ENCODE measurements at regions of chr12 and their contacts with region 1.

Region 1: GRCh38 chr12:117367011-117367638 is 5.7 kb upstream of the NOS1 start:
- DNase-seq: peak; percentile 37 to 72
- ATAC-seq: peak; percentile 74

Region 2: GRCh38 chr12:117279606-117280005 is 87.5 kb before region 1 on chr12:
- intact Hi-C with region 1: no loop called
- DNase-seq: no peak
- ATAC-seq: no peak

Region 3: GRCh38 chr12:117412465-117413188 is 45.5 kb after region 1 on chr12:
- intact Hi-C with region 1: no loop called
- DNase-seq: no peak
- ATAC-seq: no peak

Region 4: GRCh38 chr12:117587631-117588287 is 220.6 kb after region 1 on chr12:
- intact Hi-C with region 1: loop called in 1 of 2 experiments (anchors 5 kb)
- DNase-seq: peak; percentile 32 to 62
- ATAC-seq: peak; percentile 71

Region 5: DNA sequence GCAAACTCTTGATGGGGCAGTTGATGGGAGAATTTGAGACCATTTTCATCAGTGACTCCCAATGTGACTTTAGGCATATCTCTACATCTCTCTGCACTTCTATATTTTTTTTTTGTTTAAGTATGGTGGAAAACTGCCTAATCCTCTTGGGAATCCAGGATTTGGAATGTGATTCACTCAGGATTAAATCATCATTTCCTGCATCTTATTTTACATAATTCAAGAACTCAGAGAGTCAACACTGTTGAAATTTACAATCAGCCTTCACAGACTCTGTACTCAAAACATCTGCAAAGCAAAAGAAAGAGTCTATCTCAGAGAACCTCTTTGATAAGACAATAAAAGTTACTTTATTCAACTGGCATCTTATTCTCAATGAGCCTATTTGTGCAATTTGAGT is 255.0 kb after region 1 on chr12:
- intact Hi-C with region 1: no loop called
- DNase-seq: no peak
- ATAC-seq: no peak

Region 6: GRCh38 chr12:117836999-117837736 is 470.0 kb after region 1 on chr12:
- intact Hi-C with region 1: loop called in 1 of 2 experiments (anchors 5 kb)
- DNase-seq: peak in 1 of 2 donors; percentile 83
- ATAC-seq: peak; percentile 76

Measured in left colon (tissue), 2 donors.